IMR-90 (cell line): ENCODE measurements at regions of chr21 and their contacts with region 1.

Region 1: DNA sequence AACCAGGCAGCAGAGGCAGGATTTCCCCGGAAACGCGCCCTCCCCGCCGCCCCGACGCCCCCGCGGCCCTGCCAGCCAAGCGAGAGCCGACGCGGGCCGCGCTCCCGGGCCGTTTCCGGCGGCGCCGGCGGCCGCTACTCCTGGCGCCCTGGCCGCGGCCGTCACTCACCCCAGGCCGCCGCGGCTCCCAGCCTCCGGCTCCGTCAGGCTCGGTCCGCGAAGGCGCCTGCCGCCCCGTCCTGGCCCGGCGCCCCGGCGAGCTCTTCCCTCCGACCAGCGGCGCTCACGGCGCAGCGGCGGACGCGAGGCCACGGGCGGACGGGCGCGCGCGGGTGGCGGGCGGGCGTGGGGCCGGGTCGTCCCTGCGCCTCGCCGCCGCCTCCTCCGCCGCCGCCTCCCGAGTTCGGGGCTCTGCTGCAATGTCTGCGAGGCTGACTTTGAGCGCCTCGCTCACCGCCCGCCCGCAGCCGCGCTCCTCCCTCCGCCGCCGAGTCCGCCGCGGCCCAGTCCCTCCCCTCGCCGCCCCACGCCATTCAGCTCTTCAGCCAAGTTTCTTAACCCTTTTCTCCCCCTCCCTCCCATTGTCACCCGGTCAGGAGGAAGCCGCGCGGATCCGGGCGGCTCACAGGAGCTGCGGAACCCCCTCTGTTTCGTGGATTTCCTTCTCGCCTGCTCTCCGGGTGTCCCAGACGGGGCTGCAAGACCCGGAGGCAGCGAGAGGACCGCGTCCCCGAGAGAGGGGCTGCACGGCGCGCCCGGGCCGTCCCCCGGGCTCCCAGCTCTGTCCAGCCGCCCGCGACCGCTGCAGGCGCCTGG is at the start of gene NRIP1:
- DNase-seq: peak; percentile 87
- ATAC-seq: peak; percentile 83
- H3K4me3 ChIP-seq: peak within 1 kb of the TSS; percentile 99
- H3K27ac ChIP-seq: peak within 1 kb of the TSS; percentile 94
- H3K4me1 ChIP-seq: no peaks in the 10 kb centered on the region; the same call in 1 of the 2 replicates
- H3K27me3 ChIP-seq: no peaks in the 10 kb centered on the region
- CTCF ChIP-seq: no peak
- POLR2A ChIP-seq: peak; percentile 71
- RAD21 ChIP-seq: no peak
- total RNA-seq, gene NRIP1: 73.8 and 85.3 TPM in 2 replicates

Region 2: GRCh38 chr21:14382835-14383594 is 681.8 kb before region 1 on chr21 and contains the start of gene HSPA13:
- CTCF ChIA-PET with region 1: no interaction called
- POLR2A ChIA-PET with region 1: no interaction called
- dilution Hi-C with region 1: no loop called
- in situ Hi-C with region 1: no loop called
- intact Hi-C with region 1: loop called (anchors 5 kb)
- DNase-seq: peak; percentile 99
- ATAC-seq: peak; percentile 97
- H3K4me3 ChIP-seq: peak within 1 kb of the TSS; percentile 72
- H3K27ac ChIP-seq: peak within 1 kb of the TSS; percentile 78
- H3K4me1 ChIP-seq: no peaks in the 10 kb centered on the region
- H3K27me3 ChIP-seq: no peaks in the 10 kb centered on the region
- CTCF ChIP-seq: 0 out of 2 replicates have a peak, but pooled peaks have one; percentile 12
- POLR2A ChIP-seq: peak; percentile 90
- RAD21 ChIP-seq: no peak
- total RNA-seq, gene HSPA13: 43.7 and 68.9 TPM in 2 replicates

Region 3: GRCh38 chr21:14864211-14865021 is 200.4 kb before region 1 on chr21:
- CTCF ChIA-PET with region 1: interaction called, 3 read pairs
- POLR2A ChIA-PET with region 1: no interaction called
- dilution Hi-C with region 1: no loop called
- in situ Hi-C with region 1: no loop called
- intact Hi-C with region 1: loop called (anchors 1 kb)
- DNase-seq: peak; percentile 86
- ATAC-seq: peak; percentile 83
- H3K4me3 ChIP-seq: no peak overlapping the region
- H3K27ac ChIP-seq: no peak overlapping the region
- H3K4me1 ChIP-seq: peaks cover 17% of the 10 kb centered on the region
- H3K27me3 ChIP-seq: no peaks in the 10 kb centered on the region
- CTCF ChIP-seq: peak; percentile 74
- POLR2A ChIP-seq: no peak
- RAD21 ChIP-seq: peak; percentile 85

Region 4: DNA sequence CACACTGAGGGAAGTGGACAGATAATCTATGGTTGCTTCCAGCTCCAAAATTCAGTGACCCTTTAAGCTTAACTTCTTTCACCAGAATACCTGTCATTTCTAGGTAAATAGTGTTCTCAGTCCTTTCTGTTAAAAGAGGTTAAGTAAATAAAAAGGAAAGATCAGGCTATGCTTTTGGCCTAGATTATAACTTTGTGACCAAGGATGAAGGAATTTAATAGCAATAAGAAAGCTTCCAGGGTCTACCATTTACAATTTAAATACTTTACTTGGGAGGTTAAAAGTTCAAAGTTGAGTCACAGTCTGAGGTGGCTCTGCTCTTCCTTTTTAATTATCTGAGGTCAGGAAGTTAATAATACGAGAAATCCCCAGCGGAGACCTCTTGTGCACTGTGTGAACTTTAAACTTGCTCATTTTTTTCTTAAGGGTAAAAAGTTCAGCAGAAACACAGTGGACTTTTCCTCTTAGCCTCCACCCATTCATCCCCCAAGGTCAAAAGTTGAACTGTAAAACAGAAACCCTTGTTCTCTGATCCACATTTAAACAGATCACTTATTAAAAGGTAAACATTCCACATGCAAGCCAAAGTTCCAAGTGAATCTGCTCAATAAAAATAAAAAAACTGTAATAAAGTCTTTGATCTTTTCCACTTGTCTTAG is 187.1 kb before region 1 on chr21:
- CTCF ChIA-PET with region 1: no interaction called
- POLR2A ChIA-PET with region 1: no interaction called
- dilution Hi-C with region 1: no loop called
- in situ Hi-C with region 1: loop called (anchors 10 kb)
- intact Hi-C with region 1: no loop called
- DNase-seq: peak; percentile 49
- ATAC-seq: peak; percentile 45
- H3K4me3 ChIP-seq: no peak overlapping the region
- H3K27ac ChIP-seq: 0 out of 2 replicates have a peak overlapping the region, but pooled peaks have one; percentile 26
- H3K4me1 ChIP-seq: peaks cover 9% of the 10 kb centered on the region
- H3K27me3 ChIP-seq: no peaks in the 10 kb centered on the region
- CTCF ChIP-seq: no peak
- POLR2A ChIP-seq: no peak
- RAD21 ChIP-seq: no peak

Region 5: DNA sequence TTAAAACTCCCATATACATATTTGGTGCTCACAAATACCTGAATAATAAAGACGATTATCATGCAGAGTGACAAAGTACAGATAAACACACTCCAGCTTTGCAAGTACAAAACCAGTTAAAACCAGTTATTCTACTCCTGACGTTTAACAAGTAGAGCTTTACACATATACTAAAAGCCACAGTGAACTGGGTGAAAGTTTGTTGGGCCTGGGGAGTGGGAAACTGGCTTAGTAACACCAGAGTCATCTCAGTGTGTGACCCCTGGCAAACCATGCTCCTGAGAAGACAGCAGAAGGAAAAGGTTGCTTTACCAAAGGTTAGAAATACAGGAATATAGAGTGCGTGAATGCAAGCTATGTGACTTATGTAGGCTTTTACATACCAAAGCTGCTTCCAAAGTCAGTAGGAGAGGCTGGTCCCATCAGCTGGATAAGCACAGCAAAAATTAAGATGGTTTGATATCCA is 148.1 kb before region 1 on chr21:
- CTCF ChIA-PET with region 1: no interaction called
- POLR2A ChIA-PET with region 1: interaction called, 3 read pairs
- dilution Hi-C with region 1: no loop called
- in situ Hi-C with region 1: no loop called
- intact Hi-C with region 1: loop called (anchors 5 kb)
- DNase-seq: peak; percentile 66
- ATAC-seq: peak; percentile 81
- H3K4me3 ChIP-seq: no peak overlapping the region
- H3K27ac ChIP-seq: peak overlapping the region; percentile 48; the same call in 1 of the 2 replicates
- H3K4me1 ChIP-seq: peaks cover 11% of the 10 kb centered on the region; the same call in 1 of the 2 replicates
- H3K27me3 ChIP-seq: no peaks in the 10 kb centered on the region
- CTCF ChIP-seq: no peak
- POLR2A ChIP-seq: no peak
- RAD21 ChIP-seq: no peak

Region 6: DNA sequence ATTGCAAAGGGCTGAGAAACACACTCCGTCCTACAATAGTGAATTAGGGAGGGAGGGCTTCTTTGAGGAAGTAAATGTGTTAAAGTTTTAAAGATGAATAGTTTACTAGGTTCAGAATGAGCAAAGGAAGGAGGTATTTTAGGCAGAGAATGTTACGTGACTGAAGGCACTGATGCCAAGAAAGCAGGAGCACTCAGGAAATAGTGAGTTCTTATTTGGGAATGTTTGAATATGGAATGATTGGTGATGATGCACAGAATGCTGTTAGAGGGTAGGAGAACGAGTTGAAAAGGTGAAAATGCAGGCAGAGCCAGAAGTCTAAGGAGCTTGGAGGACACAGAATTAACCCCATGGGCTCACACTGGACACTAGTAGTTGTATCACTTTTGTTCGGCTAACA is 108.0 kb before region 1 on chr21:
- CTCF ChIA-PET with region 1: no interaction called
- POLR2A ChIA-PET with region 1: no interaction called
- dilution Hi-C with region 1: no loop called
- in situ Hi-C with region 1: no loop called
- intact Hi-C with region 1: loop called (anchors 2 kb)
- DNase-seq: peak; percentile 85
- ATAC-seq: peak; percentile 73
- H3K4me3 ChIP-seq: no peak overlapping the region
- H3K27ac ChIP-seq: peak overlapping the region; percentile 54; the same call in 1 of the 2 replicates
- H3K4me1 ChIP-seq: peaks cover 18% of the 10 kb centered on the region
- H3K27me3 ChIP-seq: no peaks in the 10 kb centered on the region
- CTCF ChIP-seq: no peak
- POLR2A ChIP-seq: no peak
- RAD21 ChIP-seq: no peak

Region 7: GRCh38 chr21:15005391-15005790 is 59.4 kb before region 1 on chr21:
- CTCF ChIA-PET with region 1: no interaction called
- POLR2A ChIA-PET with region 1: interaction called, 3 read pairs
- dilution Hi-C with region 1: no loop called
- in situ Hi-C with region 1: no loop called
- intact Hi-C with region 1: loop called (anchors 2 kb)
- DNase-seq: peak; percentile 38
- ATAC-seq: peak; percentile 8; the same call in 1 of the 2 replicates
- H3K4me3 ChIP-seq: peak overlapping the region; percentile 36; the same call in 1 of the 2 replicates
- H3K27ac ChIP-seq: peak overlapping the region; percentile 100
- H3K4me1 ChIP-seq: peaks cover 30% of the 10 kb centered on the region
- H3K27me3 ChIP-seq: no peaks in the 10 kb centered on the region
- CTCF ChIP-seq: no peak
- POLR2A ChIP-seq: no peak
- RAD21 ChIP-seq: no peak